GM12878 (cell line): ENCODE measurements at regions of chr7 and their contacts with region 1.

Region 1: DNA sequence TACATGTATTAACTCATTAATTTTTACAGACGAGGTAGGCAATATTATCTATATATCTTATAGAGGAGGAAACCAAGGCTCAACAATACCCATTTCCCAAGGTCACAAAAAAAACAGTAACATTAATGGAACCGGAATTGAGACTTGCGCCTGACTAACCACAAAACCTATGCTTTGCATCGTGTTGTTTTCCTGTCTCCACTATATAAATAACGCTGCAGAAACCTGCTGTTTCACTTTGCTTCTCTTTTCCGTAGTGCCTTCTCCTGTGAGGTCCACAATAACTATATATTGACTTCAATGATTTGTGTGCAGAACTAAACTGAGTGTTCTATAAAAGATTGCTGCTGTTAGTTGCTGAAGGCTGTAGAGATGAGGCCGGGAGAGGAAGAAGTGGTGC is 97.7 kb upstream of the RPA3 start:
- DNase-seq: peak; percentile 85
- ATAC-seq: peak; percentile 53
- H3K4me3 ChIP-seq: peak overlapping the region; percentile 32
- H3K27ac ChIP-seq: peak overlapping the region; percentile 67
- H3K4me1 ChIP-seq: peaks cover 43% of the 10 kb centered on the region
- H3K27me3 ChIP-seq: no peaks in the 10 kb centered on the region
- CTCF ChIP-seq: no peak
- EP300 ChIP-seq: peak; percentile 73 to 92
- POLR2A ChIP-seq: 0 out of 2 replicates have a peak, but pooled peaks have one; percentile 29
- RAD21 ChIP-seq: no peak

Region 2: GRCh38 chr7:7739204-7740036 is 76.7 kb before region 1 on chr7:
- CTCF ChIA-PET with region 1: no interaction called
- POLR2A ChIA-PET with region 1: interaction called, 3 read pairs
- RAD21 ChIA-PET with region 1: interaction called, 15 read pairs
- SMC1A ChIA-PET with region 1: interaction called, 7 read pairs
- in situ Hi-C with region 1: no loop called
- intact Hi-C with region 1: no loop called
- DNase-seq: no peak
- ATAC-seq: peak; percentile 88
- H3K4me3 ChIP-seq: no peak overlapping the region
- H3K27ac ChIP-seq: no peak overlapping the region
- H3K4me1 ChIP-seq: peaks cover 5% of the 10 kb centered on the region; the same call in 1 of the 2 replicates
- H3K27me3 ChIP-seq: no peaks in the 10 kb centered on the region
- CTCF ChIP-seq: no peak
- EP300 ChIP-seq: peak; percentile 62 to 98
- POLR2A ChIP-seq: no peak
- RAD21 ChIP-seq: no peak

Region 3: DNA sequence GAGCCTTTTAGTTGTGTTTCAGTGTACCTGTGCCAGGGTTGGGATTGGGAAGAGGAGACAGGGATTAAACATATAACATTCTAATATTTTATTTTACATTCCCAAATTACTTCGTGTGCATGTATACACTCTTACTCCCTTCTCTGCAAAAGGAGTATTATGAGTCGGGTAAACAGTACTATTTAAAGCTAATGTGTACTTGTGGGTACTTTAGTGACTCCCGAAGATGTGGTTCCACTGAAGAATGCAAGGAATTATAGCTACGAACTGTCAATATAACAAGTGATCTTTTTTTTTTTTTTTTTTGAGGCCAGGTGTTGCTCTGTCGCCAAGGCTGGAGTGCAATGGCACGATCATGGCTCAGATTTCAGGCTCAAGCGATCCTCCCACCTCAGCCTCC is 24.9 kb after region 1 on chr7:
- CTCF ChIA-PET with region 1: interaction called, 3 read pairs
- POLR2A ChIA-PET with region 1: no interaction called
- RAD21 ChIA-PET with region 1: no interaction called
- SMC1A ChIA-PET with region 1: interaction called, 12 read pairs
- in situ Hi-C with region 1: no loop called
- intact Hi-C with region 1: no loop called
- DNase-seq: no peak
- ATAC-seq: no peak
- H3K4me3 ChIP-seq: no peak overlapping the region
- H3K27ac ChIP-seq: no peak overlapping the region
- H3K4me1 ChIP-seq: no peaks in the 10 kb centered on the region
- H3K27me3 ChIP-seq: no peaks in the 10 kb centered on the region
- CTCF ChIP-seq: no peak
- EP300 ChIP-seq: no peak
- POLR2A ChIP-seq: no peak
- RAD21 ChIP-seq: no peak

Region 4: DNA sequence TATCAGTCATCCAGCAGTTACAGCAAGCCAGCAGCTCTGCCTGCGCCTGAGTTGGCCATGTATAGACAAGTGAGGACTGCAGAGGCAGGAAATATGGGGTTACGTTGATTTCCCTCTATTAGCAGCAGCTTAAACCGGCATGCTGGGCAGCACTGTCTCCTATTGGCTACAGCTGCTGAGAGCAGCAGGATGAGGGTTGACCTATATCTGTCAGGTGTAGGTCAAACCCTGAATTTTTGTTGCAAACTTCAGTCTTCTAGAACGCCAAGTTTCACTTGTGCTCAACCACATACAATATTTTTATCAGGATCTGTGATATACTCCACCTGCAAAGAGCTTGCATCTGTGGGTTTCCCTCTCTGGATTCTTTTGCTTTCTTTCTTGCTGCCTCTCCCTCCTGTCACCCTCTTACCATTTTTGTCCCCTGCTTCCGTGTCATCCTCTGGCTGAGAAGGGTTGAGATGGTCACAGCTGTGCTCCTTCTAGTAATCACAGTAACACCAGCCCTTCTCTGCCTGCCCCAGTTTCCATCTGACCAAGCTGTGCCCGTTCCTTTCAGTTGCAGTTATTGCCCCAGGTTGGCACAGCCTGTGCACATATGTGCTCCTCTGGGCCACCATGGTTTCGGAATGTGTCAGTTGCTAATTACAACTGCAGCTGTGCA is 128.7 kb after region 1 on chr7:
- CTCF ChIA-PET with region 1: interaction called, 5 read pairs
- POLR2A ChIA-PET with region 1: no interaction called
- RAD21 ChIA-PET with region 1: interaction called, 10 read pairs
- SMC1A ChIA-PET with region 1: interaction called, 13 read pairs
- in situ Hi-C with region 1: no loop called
- intact Hi-C with region 1: no loop called
- DNase-seq: peak; percentile 99
- ATAC-seq: peak; percentile 95
- H3K4me3 ChIP-seq: peak overlapping the region; percentile 52
- H3K27ac ChIP-seq: peak overlapping the region; percentile 78
- H3K4me1 ChIP-seq: peaks cover 15% of the 10 kb centered on the region
- H3K27me3 ChIP-seq: no peaks in the 10 kb centered on the region
- CTCF ChIP-seq: 0 out of 6 replicates have a peak, but pooled peaks of 1 of the 3 experiments have one; percentile 7
- EP300 ChIP-seq: peak; percentile 78 to 85
- POLR2A ChIP-seq: peak; percentile 54
- RAD21 ChIP-seq: peak; percentile 46

Region 5: DNA sequence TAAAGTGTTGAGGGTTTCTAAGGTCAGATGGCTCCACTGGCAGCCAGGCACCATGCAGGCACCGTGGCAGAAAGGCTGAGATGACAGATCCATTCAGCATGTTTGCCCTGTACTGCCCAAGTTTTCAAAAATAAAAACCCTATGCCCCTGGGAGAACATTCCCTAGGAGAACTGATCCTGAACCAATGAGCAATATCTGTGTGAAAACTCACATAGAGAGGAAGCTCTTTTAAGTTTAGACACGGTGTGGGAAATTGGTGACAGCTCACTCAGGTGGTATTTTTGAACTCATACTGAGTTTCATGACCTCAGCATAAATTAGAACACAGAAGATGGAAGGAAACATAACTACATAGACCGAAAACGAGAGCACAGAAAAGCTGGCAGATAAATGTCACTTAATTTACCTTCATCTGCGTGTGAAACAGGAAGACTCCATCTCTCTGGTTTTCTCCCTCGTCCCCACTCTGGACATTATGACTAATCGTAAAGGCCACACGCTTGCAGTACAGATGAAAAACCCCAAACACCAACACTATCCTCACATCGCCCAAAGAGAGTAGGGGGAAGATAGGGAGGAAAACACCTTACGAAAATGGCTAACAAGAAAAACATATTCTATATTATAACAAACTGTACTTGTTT is 318.1 kb after region 1 on chr7:
- CTCF ChIA-PET with region 1: interaction called, 3 read pairs
- POLR2A ChIA-PET with region 1: no interaction called
- RAD21 ChIA-PET with region 1: interaction called, 5 read pairs
- SMC1A ChIA-PET with region 1: interaction called, 7 read pairs
- in situ Hi-C with region 1: no loop called
- intact Hi-C with region 1: loop called (anchors 5 kb)
- DNase-seq: peak; percentile 99
- ATAC-seq: peak; percentile 73
- H3K4me3 ChIP-seq: no peak overlapping the region
- H3K27ac ChIP-seq: peak overlapping the region; percentile 94
- H3K4me1 ChIP-seq: peaks cover 54% of the 10 kb centered on the region
- H3K27me3 ChIP-seq: no peaks in the 10 kb centered on the region
- CTCF ChIP-seq: no peak
- EP300 ChIP-seq: peak; percentile 81 to 92
- POLR2A ChIP-seq: no peak
- RAD21 ChIP-seq: peak; percentile 39; the same call in 1 of the 2 replicates